Prostate gland (tissue), 2 donors: ENCODE measurements at regions of chr6 and their contacts with region 1.

Region 1: DNA sequence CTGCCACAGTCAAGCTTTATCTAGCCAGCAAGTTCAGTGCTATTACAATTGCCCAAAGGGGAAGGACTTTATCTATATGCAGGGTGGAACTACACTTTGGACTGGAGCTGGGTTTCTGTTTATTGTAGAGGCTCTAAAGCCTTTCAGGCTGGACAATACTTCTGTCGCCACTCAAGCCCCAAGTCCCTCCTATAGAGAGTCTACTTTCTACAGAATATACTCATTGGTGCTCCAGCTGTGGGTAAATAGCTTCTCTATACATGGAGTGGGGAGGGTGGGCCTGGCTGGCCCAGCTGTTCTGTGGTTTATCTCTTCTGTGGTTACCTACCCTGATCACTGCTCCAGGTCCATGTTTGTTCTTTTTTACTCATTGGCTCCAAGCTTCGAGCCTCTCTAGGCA is 151.8 kb upstream of the MYLIP start:
- DNase-seq: no peak
- H3K4me3 ChIP-seq: no peak overlapping the region
- H3K27ac ChIP-seq: no peak overlapping the region
- H3K4me1 ChIP-seq: no peaks in the 10 kb centered on the region
- H3K27me3 ChIP-seq: no peaks in the 10 kb centered on the region
- CTCF ChIP-seq: no peak
- POLR2A ChIP-seq: no peak

Region 2: DNA sequence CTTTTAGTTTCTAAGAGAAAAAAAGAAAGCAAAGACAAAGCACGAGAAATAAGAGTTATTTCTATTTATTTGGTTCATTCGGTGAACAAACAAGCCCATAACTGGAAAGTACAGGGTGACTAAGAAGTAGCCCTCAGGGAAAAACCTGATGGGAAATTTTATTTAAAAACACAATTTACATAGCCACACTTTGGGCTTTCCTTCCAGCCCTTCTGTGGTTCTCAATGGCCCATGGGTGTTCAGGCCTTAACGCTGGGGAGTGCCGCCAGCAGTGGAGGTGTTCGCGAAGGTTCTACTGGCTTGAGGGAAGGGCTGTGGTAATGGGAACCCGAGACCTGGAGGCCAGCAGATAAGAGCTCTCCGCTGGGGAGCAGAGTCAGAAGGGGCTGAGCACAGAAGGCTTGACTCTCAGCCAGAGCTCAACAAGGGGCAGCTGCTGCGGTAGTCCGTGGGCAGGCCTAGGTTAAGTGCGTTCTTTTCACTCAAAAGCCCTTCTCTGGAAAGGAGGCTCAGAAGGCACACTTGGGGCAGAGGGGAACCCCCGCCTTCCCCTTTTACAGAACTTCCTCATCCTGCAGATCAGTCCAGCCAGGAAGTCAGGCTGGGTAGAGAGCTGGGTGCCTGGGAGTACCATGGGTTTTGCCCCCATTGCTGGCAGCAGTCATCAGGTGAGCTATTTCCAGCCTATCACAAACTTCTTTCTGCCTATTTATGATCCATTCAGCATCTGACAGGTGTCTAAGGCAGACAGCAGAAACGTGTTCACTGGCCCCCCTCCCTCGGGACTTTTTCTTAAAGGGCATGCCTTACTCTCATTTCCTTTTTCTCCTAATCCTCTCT is 1868.3 kb before region 1 on chr6:
- intact Hi-C with region 1: loop called (anchors 10 kb)
- DNase-seq: no peak
- H3K4me3 ChIP-seq: no peak overlapping the region
- H3K27ac ChIP-seq: no peak overlapping the region
- H3K4me1 ChIP-seq: no peaks in the 10 kb centered on the region
- H3K27me3 ChIP-seq: no peaks in the 10 kb centered on the region
- CTCF ChIP-seq: no peak
- POLR2A ChIP-seq: no peak

Region 3: DNA sequence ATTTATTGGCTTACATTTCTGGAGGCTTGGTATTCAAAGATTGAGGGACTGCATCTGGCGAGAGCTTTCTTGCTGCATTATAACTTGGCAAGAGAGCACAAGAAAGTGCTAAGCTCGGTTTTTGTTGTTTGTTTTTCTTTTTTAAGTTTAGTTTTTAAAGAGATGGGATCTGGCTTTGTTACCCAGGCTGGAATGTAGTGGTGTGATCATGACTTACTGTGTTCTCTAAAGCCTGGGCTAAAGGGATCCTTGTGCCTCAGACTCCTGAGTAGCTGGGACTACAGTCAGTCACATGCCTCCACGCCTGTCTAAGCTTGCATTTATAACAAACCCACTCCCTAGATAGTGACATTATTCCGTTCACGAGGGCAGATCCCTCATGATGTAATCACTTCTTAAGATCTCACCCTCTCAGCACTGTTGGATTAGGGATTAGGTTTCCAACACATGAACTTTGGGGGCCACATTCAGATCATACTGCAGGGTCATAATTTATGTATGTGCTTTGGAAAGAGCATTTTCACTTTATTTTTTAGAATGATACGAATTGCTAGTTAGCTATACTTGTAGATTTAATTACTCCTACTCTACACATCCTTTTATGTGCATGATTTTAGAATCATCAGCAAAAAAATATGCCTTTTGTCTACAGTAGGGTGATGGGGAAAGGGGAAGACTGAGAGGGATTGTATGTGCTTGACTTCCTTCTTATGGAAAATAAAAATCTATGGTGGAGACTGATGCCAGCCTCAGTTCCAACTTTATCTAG is 563.4 kb before region 1 on chr6:
- intact Hi-C with region 1: no loop called
- DNase-seq: no peak
- H3K4me3 ChIP-seq: no peak overlapping the region
- H3K27ac ChIP-seq: no peak overlapping the region
- H3K4me1 ChIP-seq: peaks cover 6% of the 10 kb centered on the region
- H3K27me3 ChIP-seq: no peaks in the 10 kb centered on the region
- CTCF ChIP-seq: no peak
- POLR2A ChIP-seq: no peak